H1 (cell line): ENCODE measurements at regions of chr21 and their contacts with region 1.

Region 1: GRCh38 chr21:17679002-17679600 is 66.4 kb upstream of the BTG3 start:
- DNase-seq: no peak
- H3K4me3 ChIP-seq: no peak overlapping the region
- H3K27ac ChIP-seq: no peak overlapping the region
- H3K4me1 ChIP-seq: no peaks in the 10 kb centered on the region
- H3K27me3 ChIP-seq: no peaks in the 10 kb centered on the region
- CTCF ChIP-seq: peak in 2 of 3 experiments; percentile 59 to 78; a peak in 3 of 4 replicates
- EP300 ChIP-seq: no peak
- POLR2A ChIP-seq: no peak
- RAD21 ChIP-seq: peak; percentile 90 to 92

Region 2: DNA sequence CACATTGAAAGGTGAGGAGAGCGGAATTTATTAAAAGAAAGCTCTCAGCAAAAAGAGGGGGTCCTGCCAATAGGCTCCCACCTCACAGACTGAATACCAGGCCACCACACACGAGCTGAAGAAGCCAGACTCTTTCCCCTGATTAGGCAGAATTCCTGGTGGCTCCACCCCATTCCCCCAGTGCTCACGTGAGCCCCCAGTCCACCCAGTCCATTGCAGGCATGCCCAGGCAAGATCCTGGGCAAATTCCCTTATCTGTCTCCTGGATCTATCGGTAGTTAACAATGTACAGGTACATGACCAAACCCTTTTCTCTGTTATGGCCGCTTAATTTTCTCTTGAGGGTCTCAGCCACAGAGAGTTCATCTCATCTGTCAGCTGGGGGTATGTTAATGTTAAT is 11.8 kb before region 1 on chr21:
- CTCF ChIA-PET with region 1: interaction called, 10 read pairs
- POLR2A ChIA-PET with region 1: no interaction called
- DNase-seq: no peak
- H3K4me3 ChIP-seq: no peak overlapping the region
- H3K27ac ChIP-seq: no peak overlapping the region
- H3K4me1 ChIP-seq: peaks cover 0 to 11% (median 5%) of the 10 kb centered on the region in 4 experiments; a peak in 4 of 7 replicates
- H3K27me3 ChIP-seq: peaks cover 0 to 19% (median 9%) of the 10 kb centered on the region in 4 experiments; a peak in 6 of 7 replicates
- CTCF ChIP-seq: no peak
- EP300 ChIP-seq: no peak
- POLR2A ChIP-seq: peak in 1 of 2 experiments; percentile 28; a peak in 1 of 3 replicates
- RAD21 ChIP-seq: no peak

Region 3: GRCh38 chr21:17699524-17700189 is 20.6 kb after region 1 on chr21:
- CTCF ChIA-PET with region 1: no interaction called
- POLR2A ChIA-PET with region 1: no interaction called
- DNase-seq: no peak
- H3K4me3 ChIP-seq: no peak overlapping the region
- H3K27ac ChIP-seq: no peak overlapping the region
- H3K4me1 ChIP-seq: no peaks in the 10 kb centered on the region
- H3K27me3 ChIP-seq: no peaks in the 10 kb centered on the region
- CTCF ChIP-seq: no peak
- EP300 ChIP-seq: no peak
- POLR2A ChIP-seq: no peak
- RAD21 ChIP-seq: no peak

Region 4: GRCh38 chr21:17903029-17903806 is 224.1 kb after region 1 on chr21:
- CTCF ChIA-PET with region 1: interaction called, 10 read pairs
- POLR2A ChIA-PET with region 1: no interaction called
- DNase-seq: no peak
- H3K4me3 ChIP-seq: no peak overlapping the region
- H3K27ac ChIP-seq: no peak overlapping the region
- H3K4me1 ChIP-seq: peaks cover 0 to 4% (median 2%) of the 10 kb centered on the region in 4 experiments; a peak in 3 of 7 replicates
- H3K27me3 ChIP-seq: no peaks in the 10 kb centered on the region
- CTCF ChIP-seq: no peak
- EP300 ChIP-seq: no peak
- POLR2A ChIP-seq: no peak
- RAD21 ChIP-seq: no peak